ENCODE measurements at regions of chr2 and their contacts with region 1.

Region 1: DNA sequence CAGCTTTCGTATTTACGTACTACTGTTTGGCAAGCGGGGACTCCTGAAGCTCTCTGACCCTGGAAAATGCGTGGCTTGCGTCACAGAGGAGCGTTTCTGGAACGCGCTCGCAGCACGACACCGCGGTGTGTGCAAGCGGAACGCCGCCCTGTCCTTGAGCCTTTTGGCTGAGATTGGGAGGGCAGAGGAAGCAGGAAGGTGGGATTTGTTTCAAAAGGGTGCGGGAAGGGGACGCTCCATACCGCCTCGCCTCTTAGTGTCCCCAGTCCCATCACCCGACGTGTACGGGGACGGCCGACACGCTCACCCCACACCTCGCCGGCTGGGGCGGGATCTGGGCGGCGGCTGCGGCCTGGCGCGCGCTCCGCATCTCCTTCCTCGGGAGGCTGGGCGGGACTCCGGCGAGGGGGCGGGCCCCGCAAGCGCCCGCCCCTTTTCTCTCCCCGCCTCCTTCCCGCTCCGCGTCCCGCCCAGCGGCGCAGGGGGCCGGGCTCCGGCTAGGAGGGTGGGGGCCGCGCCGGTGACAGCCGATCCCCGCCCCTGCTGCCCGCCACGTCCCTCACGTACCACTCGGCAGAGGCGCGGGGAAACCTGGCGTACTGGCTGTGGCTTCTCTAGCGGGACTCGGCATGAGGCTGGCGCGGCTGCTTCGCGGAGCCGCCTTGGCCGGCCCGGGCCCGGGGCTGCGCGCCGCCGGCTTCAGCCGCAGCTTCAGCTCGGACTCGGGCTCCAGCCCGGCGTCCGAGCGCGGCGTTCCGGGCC is at the start of gene PDK1:
- DNase-seq: peak; percentile 96
- ATAC-seq: peak; percentile 89
- H3K4me3 Mint-ChIP-seq: peak within 1 kb of the TSS; percentile 88
- H3K27ac Mint-ChIP-seq: peak within 1 kb of the TSS; percentile 95
- H3K4me1 Mint-ChIP-seq: peaks cover 57% of the 10 kb centered on the region
- H3K27me3 Mint-ChIP-seq: peaks cover 6% of the 10 kb centered on the region
- total RNA-seq, gene PDK1: 56.8 to 85.5 TPM

Region 2: GRCh38 chr2:171687287-171688128 is 868.2 kb before region 1 on chr2 and contains the start of gene DYNC1I2:
- CTCF ChIA-PET with region 1: no interaction called
- POLR2A ChIA-PET with region 1: no interaction called
- intact Hi-C with region 1: loop called in 1 of 2 experiments (anchors 5 kb)
- DNase-seq: peak; percentile 86
- ATAC-seq: peak; percentile 95
- H3K4me3 Mint-ChIP-seq: peak within 1 kb of the TSS; percentile 83
- H3K27ac Mint-ChIP-seq: peak within 1 kb of the TSS; percentile 90
- H3K4me1 Mint-ChIP-seq: peaks cover 15% of the 10 kb centered on the region
- H3K27me3 Mint-ChIP-seq: no peaks in the 10 kb centered on the region
- total RNA-seq, gene DYNC1I2: 46.2 to 51.1 TPM

Region 3: DNA sequence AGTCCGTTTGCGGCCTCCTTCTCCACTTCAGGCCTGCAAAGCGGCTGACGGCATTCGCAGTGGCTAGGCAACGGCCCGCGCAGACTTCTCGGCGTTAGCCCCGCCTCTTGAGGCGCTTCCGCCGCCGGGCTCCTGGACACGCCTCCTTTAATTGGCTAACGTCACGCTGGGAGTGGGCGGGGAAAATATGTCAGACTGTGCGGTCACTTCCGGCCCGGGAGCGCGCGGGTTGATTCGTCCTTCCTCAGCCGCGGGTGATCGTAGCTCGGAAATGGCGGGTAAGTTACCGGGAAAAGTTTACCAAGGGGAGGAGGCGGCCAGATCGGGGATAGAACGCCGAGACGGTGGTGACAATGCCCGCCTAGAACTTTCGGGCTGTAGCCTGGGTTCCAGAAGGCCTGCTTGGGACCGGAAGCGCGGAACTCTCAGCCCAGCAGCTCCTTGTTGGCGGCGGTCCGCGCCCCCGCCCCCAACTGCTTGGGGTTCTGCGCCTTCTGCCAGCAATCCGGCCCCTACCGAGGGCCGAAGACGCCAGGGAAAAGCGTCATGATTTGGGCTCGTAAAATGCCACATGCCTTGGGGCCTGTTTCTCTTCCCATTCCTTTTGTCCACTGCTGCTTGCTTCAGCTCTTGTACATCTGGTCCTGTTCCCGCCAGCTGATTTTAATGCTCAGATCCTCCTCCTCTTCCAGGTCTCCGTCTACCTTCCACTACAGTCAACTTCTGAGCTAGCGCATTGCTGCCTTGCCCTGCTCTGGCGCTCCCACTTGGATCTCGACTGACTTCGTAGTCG is 633.3 kb before region 1 on chr2 and contains the start of gene HAT1:
- CTCF ChIA-PET with region 1: no interaction called
- POLR2A ChIA-PET with region 1: no interaction called
- intact Hi-C with region 1: loop called in 1 of 2 experiments (anchors 1 kb)
- DNase-seq: peak; percentile 99
- ATAC-seq: peak; percentile 96
- H3K4me3 Mint-ChIP-seq: peak within 1 kb of the TSS; percentile 94
- H3K27ac Mint-ChIP-seq: peak within 1 kb of the TSS; percentile 98
- H3K4me1 Mint-ChIP-seq: peaks cover 38% of the 10 kb centered on the region
- H3K27me3 Mint-ChIP-seq: no peaks in the 10 kb centered on the region
- total RNA-seq, gene HAT1: 88.5 to 92.6 TPM

Region 4: GRCh38 chr2:172280571-172281361 is 274.9 kb before region 1 on chr2:
- CTCF ChIA-PET with region 1: no interaction called
- POLR2A ChIA-PET with region 1: no interaction called
- intact Hi-C with region 1: no loop called
- DNase-seq: no peak
- ATAC-seq: no peak
- H3K4me3 Mint-ChIP-seq: no peak overlapping the region
- H3K27ac Mint-ChIP-seq: no peak overlapping the region
- H3K4me1 Mint-ChIP-seq: peaks cover 8% of the 10 kb centered on the region
- H3K27me3 Mint-ChIP-seq: peaks cover 3% of the 10 kb centered on the region

Region 5: DNA sequence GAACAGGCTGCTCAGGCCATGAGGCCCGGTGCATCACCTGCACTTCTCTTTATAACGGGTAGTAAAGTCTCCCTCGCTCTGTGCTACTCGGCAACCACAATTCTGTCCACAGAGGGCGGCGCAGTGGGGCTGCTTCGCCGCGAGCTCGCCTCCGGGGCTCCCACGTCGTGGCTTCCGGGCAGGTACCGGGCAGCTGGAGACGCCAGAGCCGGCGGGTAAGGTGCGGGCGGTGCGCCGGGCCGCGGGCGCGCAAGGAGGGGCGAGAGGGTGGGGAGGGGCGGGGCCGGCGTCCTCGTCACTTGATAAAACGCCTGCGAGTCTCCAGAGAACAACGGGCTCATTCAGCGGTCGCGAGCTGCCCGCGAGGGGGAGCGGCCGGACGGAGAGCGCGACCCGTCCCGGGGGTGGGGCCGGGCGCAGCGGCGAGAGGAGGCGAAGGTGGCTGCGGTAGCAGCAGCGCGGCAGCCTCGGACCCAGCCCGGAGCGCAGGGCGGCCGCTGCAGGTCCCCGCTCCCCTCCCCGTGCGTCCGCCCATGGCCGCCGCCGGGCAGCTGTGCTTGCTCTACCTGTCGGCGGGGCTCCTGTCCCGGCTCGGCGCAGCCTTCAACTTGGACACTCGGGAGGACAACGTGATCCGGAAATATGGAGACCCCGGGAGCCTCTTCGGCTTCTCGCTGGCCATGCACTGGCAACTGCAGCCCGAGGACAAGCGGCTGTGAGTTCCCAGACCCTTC is 128.3 kb before region 1 on chr2 and contains the start of gene ITGA6:
- CTCF ChIA-PET with region 1: no interaction called
- POLR2A ChIA-PET with region 1: no interaction called
- intact Hi-C with region 1: loop called (anchors 2 to 5 kb)
- DNase-seq: peak; percentile 85
- ATAC-seq: peak; percentile 59
- H3K4me3 Mint-ChIP-seq: peak within 1 kb of the TSS; percentile 80
- H3K27ac Mint-ChIP-seq: peak within 1 kb of the TSS; percentile 73
- H3K4me1 Mint-ChIP-seq: peaks cover 79% of the 10 kb centered on the region
- H3K27me3 Mint-ChIP-seq: peaks cover 2% of the 10 kb centered on the region
- total RNA-seq, gene ITGA6: 7.8 to 7.9 TPM

Region 6: DNA sequence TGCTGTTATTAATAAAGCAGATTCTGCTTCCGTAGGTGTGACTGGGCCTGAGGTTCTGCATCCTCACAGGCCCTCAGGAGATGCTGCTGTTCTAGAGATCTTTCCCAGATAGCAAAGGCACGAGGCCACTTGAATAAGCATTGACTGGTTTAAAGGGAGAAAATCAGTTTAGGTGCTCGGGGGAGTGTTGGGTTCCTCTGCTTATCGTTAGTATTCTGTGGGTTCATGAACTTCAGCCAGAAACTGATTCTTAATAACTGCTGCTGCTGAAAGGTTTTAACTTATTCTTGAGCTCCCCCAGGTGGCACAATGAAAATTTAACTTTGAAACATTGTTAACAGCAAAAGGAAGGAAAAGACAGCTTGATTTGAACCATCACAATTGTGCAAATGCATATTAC is 71.5 kb before region 1 on chr2:
- CTCF ChIA-PET with region 1: no interaction called
- POLR2A ChIA-PET with region 1: no interaction called
- intact Hi-C with region 1: no loop called
- DNase-seq: no peak
- ATAC-seq: peak; percentile 37
- H3K4me3 Mint-ChIP-seq: no peak overlapping the region
- H3K27ac Mint-ChIP-seq: no peak overlapping the region
- H3K4me1 Mint-ChIP-seq: peaks cover 44% of the 10 kb centered on the region
- H3K27me3 Mint-ChIP-seq: no peaks in the 10 kb centered on the region

Region 7: DNA sequence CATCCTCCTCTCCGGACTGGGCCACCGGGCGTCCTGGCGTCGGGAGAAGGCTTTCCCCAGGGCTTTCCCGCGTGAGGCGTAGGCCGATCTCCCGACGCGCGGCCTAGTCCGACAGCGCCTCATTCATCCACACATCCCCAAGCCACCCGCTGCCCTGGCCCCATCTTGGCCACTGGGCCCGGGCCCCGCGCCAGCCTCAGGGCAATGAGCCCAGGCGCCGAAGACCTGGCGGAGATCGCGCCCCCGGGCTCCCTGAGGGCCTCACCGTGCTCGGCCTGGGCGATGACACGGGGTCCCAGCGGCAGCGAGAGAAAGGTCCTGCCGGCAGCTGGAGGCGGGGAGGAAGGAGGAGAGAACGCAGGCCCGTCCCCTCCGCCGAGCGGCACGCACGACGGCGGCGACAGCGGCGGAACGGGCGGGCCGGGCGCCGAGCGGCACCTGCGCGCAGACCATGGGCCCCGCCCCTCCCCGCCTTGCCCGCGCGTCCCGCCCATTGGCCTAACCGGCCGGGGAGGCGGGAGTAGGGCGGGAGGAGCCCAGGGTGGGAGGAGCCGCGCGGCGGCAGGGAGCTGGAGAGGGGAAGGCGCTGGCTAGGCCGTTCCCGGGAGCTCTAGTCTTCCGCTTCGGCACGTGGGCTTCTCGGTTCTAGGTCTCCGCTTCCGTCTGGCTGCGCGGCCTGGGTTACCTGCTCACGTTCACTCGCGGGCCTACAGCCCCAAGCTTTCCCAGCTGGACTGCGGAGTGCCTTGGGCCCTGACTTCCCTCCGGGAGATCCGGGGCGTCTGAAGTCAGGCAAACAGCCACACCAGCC is 1692.7 kb after region 1 on chr2 and contains the start of gene OLA1:
- CTCF ChIA-PET with region 1: no interaction called
- POLR2A ChIA-PET with region 1: no interaction called
- intact Hi-C with region 1: loop called in 1 of 2 experiments (anchors 2 kb)
- DNase-seq: peak; percentile 98
- ATAC-seq: peak; percentile 97
- H3K4me3 Mint-ChIP-seq: peak within 1 kb of the TSS; percentile 90
- H3K27ac Mint-ChIP-seq: peak within 1 kb of the TSS; percentile 85
- H3K4me1 Mint-ChIP-seq: peaks cover 31% of the 10 kb centered on the region
- H3K27me3 Mint-ChIP-seq: no peaks in the 10 kb centered on the region
- total RNA-seq, gene OLA1: 136 to 157 TPM

Measured in activated CD4-positive, alpha-beta T cell treated with anti-CD3 and anti-CD28 coated beads for 36 hours (primary cell).